A673 (cell line): ENCODE measurements at regions of chr12 and their contacts with region 1.

Region 1: DNA sequence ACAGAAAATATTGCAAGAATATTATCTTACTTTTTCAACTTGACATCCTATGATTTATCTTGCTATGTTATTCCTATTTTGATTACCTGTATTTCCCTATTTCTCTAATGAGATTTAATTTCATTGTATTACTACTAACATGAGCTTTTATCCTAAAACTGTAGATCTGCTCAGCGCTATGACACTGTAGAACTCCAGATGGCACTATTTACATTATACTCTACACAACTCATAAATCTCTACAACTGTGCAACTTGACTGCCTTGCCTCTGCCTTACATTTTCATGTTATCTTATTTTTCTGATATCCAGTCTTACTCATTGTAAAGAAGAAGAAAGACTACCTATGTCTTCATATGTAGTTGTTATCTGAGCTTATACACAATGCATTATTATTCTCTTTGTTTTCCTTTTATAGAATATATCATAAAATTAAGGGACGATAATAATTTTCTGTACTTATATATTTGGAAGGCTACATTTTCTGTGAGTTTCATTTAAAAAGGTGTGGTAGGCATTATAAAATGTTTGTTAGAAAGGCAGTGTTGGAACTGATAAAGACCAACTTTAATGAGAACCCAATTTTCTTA is 24.1 kb downstream of the NUP37 start:
- DNase-seq: peak; percentile 41
- H3K4me3 ChIP-seq: no peak overlapping the region
- H3K27ac ChIP-seq: no peak overlapping the region
- H3K4me1 ChIP-seq: no peaks in the 10 kb centered on the region
- H3K27me3 ChIP-seq: no peaks in the 10 kb centered on the region
- CTCF ChIP-seq: peak; percentile 67

Region 2: DNA sequence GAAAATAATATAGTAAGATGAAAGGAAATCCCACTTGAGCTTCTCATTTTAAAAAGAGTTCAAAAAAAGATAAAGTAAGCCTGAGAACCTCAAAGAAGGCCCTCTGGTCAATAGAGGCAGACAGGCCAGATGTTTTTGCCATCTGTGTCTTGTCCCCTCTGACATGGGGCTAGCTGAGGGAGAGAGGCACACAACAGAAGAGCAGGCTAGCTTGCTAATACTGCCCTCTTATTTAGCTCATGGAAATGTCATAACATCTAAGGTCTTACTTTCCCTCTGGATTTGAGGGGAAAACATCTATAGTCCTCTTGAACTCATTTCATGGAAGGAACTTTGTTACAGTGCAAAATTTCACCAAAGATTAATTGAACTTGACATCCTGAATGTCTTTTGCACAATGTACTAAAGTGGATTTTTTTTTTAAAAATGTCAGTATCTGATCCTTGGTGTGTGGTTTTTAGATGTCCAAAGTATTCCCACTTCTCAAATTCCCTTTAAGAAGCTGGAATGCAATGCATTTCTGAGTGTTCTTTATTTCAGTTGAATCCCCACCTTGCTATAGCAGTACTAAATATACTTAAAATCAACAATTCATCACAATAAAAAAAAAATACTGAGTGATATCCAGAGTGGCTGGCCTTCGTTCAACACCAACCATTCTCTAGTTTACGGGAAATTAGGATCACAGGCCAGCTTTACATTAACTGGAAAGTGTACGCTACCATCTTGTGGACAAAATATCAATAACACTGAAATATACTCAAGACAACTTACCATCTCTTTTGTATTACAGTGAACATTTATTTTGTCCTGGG is 644.6 kb after region 1 on chr12:
- CTCF ChIA-PET with region 1: no interaction called
- POLR2A ChIA-PET with region 1: no interaction called
- intact Hi-C with region 1: loop called (anchors 5 kb)
- DNase-seq: peak; percentile 60
- H3K4me3 ChIP-seq: no peak overlapping the region
- H3K27ac ChIP-seq: no peak overlapping the region
- H3K4me1 ChIP-seq: no peaks in the 10 kb centered on the region
- H3K27me3 ChIP-seq: no peaks in the 10 kb centered on the region
- CTCF ChIP-seq: peak; percentile 51

Region 3: GRCh38 chr12:102816816-102817434 is 721.2 kb after region 1 on chr12:
- CTCF ChIA-PET with region 1: no interaction called
- POLR2A ChIA-PET with region 1: no interaction called
- intact Hi-C with region 1: loop called (anchors 10 kb)
- DNase-seq: peak; percentile 69
- H3K4me3 ChIP-seq: no peak overlapping the region
- H3K27ac ChIP-seq: no peak overlapping the region
- H3K4me1 ChIP-seq: no peaks in the 10 kb centered on the region
- H3K27me3 ChIP-seq: peaks cover 18% of the 10 kb centered on the region
- CTCF ChIP-seq: peak; percentile 79